IMR-90 (cell line): ENCODE measurements at regions of chr16 and their contacts with region 1.

Region 1: DNA sequence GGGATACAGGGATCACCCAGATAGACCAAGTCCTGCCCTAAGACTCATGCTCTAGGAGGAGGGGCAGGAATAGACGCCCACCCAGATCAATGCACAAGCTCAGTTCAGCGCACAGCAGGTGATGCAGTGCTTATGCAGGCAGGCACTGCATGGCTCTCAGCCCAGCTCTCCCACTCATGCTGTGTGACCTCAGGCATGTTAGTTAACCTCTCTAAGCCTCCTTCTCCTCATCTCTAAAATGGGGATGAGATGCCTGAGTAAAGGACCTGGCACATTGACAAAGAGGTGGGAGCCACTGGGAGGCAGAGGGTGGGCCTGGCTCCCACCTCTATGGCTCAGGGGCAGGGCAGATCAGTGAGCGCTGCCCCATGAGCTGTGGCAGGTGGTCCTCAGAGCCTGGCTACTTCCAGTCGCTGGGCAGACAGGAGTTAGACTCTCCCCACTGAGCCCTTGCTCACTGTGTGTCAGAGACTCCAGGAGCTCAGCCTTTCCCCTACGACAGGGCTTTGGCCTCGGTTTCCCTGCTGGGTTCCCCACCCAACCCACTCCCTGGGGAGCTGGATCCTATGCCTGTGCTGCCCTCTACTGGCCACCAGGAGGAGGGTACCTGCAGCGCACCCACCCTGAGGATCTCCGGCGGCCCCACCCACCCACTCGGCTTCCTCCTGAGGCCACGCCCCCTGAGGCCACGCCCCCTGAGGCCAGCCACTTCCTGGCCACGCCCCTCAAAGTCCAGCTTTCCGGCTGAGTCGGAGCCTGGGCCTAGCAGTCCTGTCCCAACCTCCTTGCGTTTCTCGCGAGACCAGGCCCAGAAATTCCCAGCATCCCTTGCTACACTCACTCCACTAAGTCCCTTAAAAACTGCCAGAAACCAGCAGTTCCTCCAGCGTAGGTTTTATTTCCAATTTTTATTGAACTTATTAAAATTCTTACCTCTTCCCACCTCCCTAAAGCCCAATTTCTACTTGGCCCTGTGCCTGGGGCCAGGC is 196.1 kb downstream of the GSG1L start:
- DNase-seq: peak; percentile 51
- ATAC-seq: peak; percentile 94
- H3K4me3 ChIP-seq: no peak overlapping the region
- H3K27ac ChIP-seq: no peak overlapping the region
- H3K4me1 ChIP-seq: no peaks in the 10 kb centered on the region
- H3K27me3 ChIP-seq: no peaks in the 10 kb centered on the region
- CTCF ChIP-seq: peak; percentile 52
- POLR2A ChIP-seq: no peak
- RAD21 ChIP-seq: peak; percentile 61

Region 2: DNA sequence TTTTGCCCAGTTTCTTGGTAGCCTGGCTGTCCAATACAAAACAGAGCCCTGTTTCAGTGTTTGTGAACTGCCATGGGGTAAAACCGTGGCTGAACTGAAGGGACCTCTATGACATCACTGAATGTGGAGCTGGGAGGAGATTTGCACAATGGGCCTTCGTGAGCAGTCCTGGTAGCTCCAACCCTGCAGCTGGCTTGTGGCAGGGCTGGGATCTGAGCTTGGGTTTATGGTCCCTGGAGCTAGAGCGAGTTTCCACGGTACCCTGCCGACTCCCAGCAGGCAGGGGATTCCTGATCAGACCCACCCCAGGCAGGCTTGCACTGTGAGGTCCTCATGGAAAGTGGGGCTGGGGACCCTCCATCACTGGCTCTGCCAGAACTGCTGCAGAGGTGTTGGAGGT is 50.9 kb before region 1 on chr16:
- CTCF ChIA-PET with region 1: no interaction called
- POLR2A ChIA-PET with region 1: interaction called, 10 read pairs
- dilution Hi-C with region 1: no loop called
- in situ Hi-C with region 1: no loop called
- intact Hi-C with region 1: no loop called
- DNase-seq: no peak
- ATAC-seq: no peak
- H3K4me3 ChIP-seq: no peak overlapping the region
- H3K27ac ChIP-seq: no peak overlapping the region
- H3K4me1 ChIP-seq: no peaks in the 10 kb centered on the region
- H3K27me3 ChIP-seq: peaks cover 34% of the 10 kb centered on the region
- CTCF ChIP-seq: no peak
- POLR2A ChIP-seq: no peak
- RAD21 ChIP-seq: no peak

Region 3: DNA sequence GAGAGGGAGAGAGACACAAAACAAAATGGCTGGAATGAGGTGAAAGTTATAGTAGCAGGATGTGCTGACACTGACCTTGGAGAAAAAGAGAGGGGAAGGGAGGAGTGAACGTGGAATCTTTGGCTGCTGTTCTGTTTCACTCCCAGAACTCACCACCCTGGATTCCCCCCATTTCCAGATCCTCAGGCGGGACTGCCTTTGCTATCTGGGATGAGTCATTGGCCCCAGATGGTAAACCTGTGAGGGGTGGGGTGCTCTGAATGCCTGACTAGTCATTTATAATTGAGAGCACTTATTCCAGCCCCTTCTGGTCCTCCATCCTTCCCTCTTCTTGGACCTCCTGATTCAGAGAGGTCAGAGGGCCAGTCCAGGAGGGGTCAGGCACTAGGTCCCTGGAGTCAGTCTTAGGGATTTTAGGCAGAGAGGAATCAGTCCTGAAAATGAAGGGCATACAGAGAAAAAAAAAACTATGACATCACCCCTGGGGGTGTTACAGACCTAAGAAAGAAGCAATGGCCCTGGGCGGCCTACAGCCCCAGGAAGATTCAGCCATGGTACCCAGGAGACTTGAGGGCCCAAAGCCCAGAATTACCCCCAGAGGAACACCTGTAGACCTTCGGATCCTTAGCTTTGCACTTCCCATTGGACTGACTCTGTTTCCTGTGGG is 1908.5 kb after region 1 on chr16:
- CTCF ChIA-PET with region 1: no interaction called
- POLR2A ChIA-PET with region 1: no interaction called
- dilution Hi-C with region 1: no loop called
- in situ Hi-C with region 1: no loop called
- intact Hi-C with region 1: no loop called
- DNase-seq: peak; percentile 43
- ATAC-seq: peak; percentile 60
- H3K4me3 ChIP-seq: no peak overlapping the region
- H3K27ac ChIP-seq: no peak overlapping the region
- H3K4me1 ChIP-seq: peaks cover 1% of the 10 kb centered on the region; the same call in 1 of the 2 replicates
- H3K27me3 ChIP-seq: peaks cover 25% of the 10 kb centered on the region
- CTCF ChIP-seq: no peak
- POLR2A ChIP-seq: no peak
- RAD21 ChIP-seq: no peak